OCI-LY7 (cell line): ENCODE measurements at regions of chr13 and their contacts with region 1.

Region 1: GRCh38 chr13:66689628-66690027 is 540.5 kb downstream of the PCDH9 start:
- DNase-seq: peak; percentile 76
- H3K4me3 ChIP-seq: no peak overlapping the region
- H3K27ac ChIP-seq: peak overlapping the region; percentile 28
- H3K4me1 ChIP-seq: peaks cover 18% of the 10 kb centered on the region
- CTCF ChIP-seq: peak; percentile 77

Region 2: GRCh38 chr13:65656740-65657329 is 1032.8 kb before region 1 on chr13:
- CTCF ChIA-PET with region 1: no interaction called
- POLR2A ChIA-PET with region 1: no interaction called
- intact Hi-C with region 1: loop called (anchors 5 kb)
- DNase-seq: peak; percentile 6
- H3K4me3 ChIP-seq: no peak overlapping the region
- H3K27ac ChIP-seq: no peak overlapping the region
- H3K4me1 ChIP-seq: no peaks in the 10 kb centered on the region
- CTCF ChIP-seq: peak; percentile 79

Region 3: GRCh38 chr13:66492479-66492878 is 197.1 kb before region 1 on chr13:
- CTCF ChIA-PET with region 1: no interaction called
- POLR2A ChIA-PET with region 1: no interaction called
- intact Hi-C with region 1: loop called (anchors 2 kb)
- DNase-seq: peak; percentile 90
- H3K4me3 ChIP-seq: peak overlapping the region; percentile 25
- H3K27ac ChIP-seq: peak overlapping the region; percentile 63
- H3K4me1 ChIP-seq: peaks cover 30% of the 10 kb centered on the region
- CTCF ChIP-seq: peak; percentile 57

Region 4: DNA sequence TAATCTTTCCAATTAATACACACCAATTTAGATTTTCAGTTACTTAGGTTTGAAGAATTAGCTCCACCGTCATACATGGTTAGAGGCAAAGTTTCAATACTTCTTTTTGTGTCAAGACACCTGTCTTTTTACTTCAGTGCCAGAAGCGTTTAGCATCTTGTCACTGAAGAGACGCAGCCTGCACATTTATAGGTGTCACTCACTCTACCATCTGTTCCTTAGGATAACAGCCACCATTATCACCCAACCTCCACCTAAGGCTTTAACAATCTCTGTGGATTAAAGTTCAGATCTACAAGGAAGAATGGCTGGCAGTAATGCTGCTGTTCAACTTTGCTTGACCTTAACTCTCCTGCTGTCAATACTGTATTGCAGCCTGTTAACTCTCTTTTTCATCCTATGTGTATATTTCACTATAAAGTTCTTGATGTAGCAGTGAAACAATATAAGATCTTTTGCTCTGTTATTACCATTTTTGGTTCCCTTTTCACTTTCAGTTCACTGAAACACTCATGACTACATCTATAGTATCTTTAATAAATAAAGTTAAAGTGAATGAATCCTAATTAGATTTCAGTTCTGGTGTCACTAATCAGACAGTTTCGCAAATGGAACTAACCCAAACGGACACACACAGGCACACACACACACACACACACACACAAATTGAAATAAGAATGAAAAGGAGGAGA is 104.9 kb after region 1 on chr13:
- CTCF ChIA-PET with region 1: no interaction called
- POLR2A ChIA-PET with region 1: interaction called, 3 read pairs
- intact Hi-C with region 1: loop called (anchors 5 kb)
- DNase-seq: peak; percentile 92
- H3K4me3 ChIP-seq: peak overlapping the region; percentile 39
- H3K27ac ChIP-seq: peak overlapping the region; percentile 94
- H3K4me1 ChIP-seq: peaks cover 35% of the 10 kb centered on the region
- CTCF ChIP-seq: no peak

Region 5: DNA sequence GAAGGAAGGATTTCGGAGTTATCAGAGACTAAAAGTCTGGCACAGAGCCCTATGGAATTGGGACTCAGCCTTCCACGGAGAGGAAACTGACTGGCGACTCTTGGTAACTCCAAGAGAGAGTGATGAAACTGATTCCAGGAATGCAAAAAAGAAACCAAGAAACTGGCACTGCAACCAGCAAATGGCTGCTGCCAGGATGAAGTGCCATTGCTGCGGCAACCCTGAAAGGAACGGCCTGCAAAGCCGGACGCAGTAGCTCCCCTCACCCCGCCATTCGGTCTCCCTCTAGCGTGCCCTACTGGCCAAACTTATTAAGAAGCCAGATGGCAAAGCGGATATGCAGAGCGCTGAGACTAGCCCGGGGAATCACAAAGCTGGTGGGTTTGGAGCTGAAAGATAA is 304.5 kb after region 1 on chr13:
- CTCF ChIA-PET with region 1: interaction called, 5 read pairs
- POLR2A ChIA-PET with region 1: interaction called, 45 read pairs
- intact Hi-C with region 1: loop called (anchors 1 kb)
- DNase-seq: peak; percentile 90
- H3K4me3 ChIP-seq: peak overlapping the region; percentile 49
- H3K27ac ChIP-seq: peak overlapping the region; percentile 99
- H3K4me1 ChIP-seq: peaks cover 70% of the 10 kb centered on the region
- CTCF ChIP-seq: peak; percentile 81

Region 6: GRCh38 chr13:67238277-67238859 is 548.7 kb after region 1 on chr13:
- CTCF ChIA-PET with region 1: interaction called, 3 read pairs
- POLR2A ChIA-PET with region 1: interaction called, 6 read pairs
- intact Hi-C with region 1: loop called (anchors 1 kb)
- DNase-seq: peak; percentile 60
- H3K4me3 ChIP-seq: no peak overlapping the region
- H3K27ac ChIP-seq: no peak overlapping the region
- H3K4me1 ChIP-seq: peaks cover 6% of the 10 kb centered on the region
- CTCF ChIP-seq: peak; percentile 94